AG04450 (cell line): ENCODE measurements at regions of chr4 and their contacts with region 1.

Region 1: DNA sequence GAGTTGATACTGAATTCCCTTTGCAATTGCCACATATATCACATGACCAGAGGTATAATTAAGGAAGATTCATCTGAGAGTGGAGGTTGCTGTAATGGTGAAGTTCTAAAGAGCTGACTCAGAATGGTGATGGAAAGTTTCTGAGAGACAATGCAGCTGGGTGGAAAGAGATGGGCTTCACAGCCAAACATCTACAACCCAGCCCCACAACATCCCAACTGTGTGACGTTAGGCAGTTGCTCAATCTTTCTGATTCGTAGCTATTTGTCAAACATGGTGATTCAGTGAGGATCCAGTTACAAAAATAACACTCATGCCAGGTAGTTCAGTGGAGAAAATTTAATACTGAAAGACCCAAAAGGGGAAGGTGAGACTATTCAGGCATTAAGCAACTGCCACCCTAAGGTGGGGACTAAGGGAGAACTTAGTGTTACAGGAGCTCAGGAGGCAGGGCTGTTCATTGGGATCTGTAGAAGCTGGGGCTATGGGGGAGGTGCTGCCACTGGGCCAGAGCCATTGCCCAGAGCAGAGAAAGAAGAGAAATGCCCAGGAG is 6.9 kb upstream of the AFF1 start:
- DNase-seq: peak; percentile 96
- H3K4me3 ChIP-seq: no peak overlapping the region
- H3K27ac ChIP-seq: peak overlapping the region; percentile 82
- H3K27me3 ChIP-seq: no peaks in the 10 kb centered on the region
- CTCF ChIP-seq: no peak

Region 2: GRCh38 chr4:86778175-86778574 is 149.7 kb before region 1 on chr4:
- CTCF ChIA-PET with region 1: interaction called, 11 read pairs
- POLR2A ChIA-PET with region 1: no interaction called
- DNase-seq: no peak
- H3K4me3 ChIP-seq: no peak overlapping the region
- H3K27ac ChIP-seq: no peak overlapping the region
- H3K27me3 ChIP-seq: no peaks in the 10 kb centered on the region
- CTCF ChIP-seq: no peak

Region 3: GRCh38 chr4:86878640-86879039 is 49.3 kb before region 1 on chr4:
- CTCF ChIA-PET with region 1: no interaction called
- POLR2A ChIA-PET with region 1: no interaction called
- DNase-seq: no peak
- H3K4me3 ChIP-seq: no peak overlapping the region
- H3K27ac ChIP-seq: no peak overlapping the region
- H3K27me3 ChIP-seq: no peaks in the 10 kb centered on the region
- CTCF ChIP-seq: no peak

Region 4: GRCh38 chr4:87006676-87007527 is 79.0 kb after region 1 on chr4:
- CTCF ChIA-PET with region 1: interaction called, 62 read pairs
- POLR2A ChIA-PET with region 1: interaction called, 24 read pairs
- DNase-seq: peak; percentile 87
- H3K4me3 ChIP-seq: peak overlapping the region; percentile 71
- H3K27ac ChIP-seq: peak overlapping the region; percentile 99
- H3K27me3 ChIP-seq: no peaks in the 10 kb centered on the region
- CTCF ChIP-seq: peak; percentile 53

Region 5: GRCh38 chr4:87093443-87094123 is 165.7 kb after region 1 on chr4:
- CTCF ChIA-PET with region 1: interaction called, 77 read pairs
- POLR2A ChIA-PET with region 1: interaction called, 4 read pairs
- DNase-seq: no peak
- H3K4me3 ChIP-seq: no peak overlapping the region
- H3K27ac ChIP-seq: no peak overlapping the region
- H3K27me3 ChIP-seq: no peaks in the 10 kb centered on the region
- CTCF ChIP-seq: peak; percentile 53

Region 6: DNA sequence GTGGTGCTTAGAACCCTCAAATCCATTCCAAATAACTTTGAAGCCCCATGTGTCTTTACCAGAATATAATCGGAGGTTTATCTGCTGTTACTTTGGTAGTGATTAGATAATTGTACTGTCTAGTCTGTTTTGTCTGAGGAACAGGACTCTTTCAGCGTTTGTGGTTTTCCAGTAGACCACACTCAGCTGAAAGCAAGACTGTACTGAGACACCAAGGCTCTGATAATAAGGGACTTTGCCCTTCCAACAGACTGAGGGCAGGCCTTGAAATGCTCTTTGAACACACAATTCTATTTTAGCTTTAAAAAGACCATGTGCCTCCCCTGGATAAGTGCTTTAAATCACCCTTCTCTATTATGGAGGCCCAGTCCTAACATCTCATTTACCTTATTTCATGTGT is 216.4 kb after region 1 on chr4:
- CTCF ChIA-PET with region 1: interaction called, 19 read pairs
- POLR2A ChIA-PET with region 1: no interaction called
- DNase-seq: no peak
- H3K4me3 ChIP-seq: no peak overlapping the region
- H3K27ac ChIP-seq: no peak overlapping the region
- H3K27me3 ChIP-seq: no peaks in the 10 kb centered on the region
- CTCF ChIP-seq: no peak

Region 7: GRCh38 chr4:87235020-87235671 is 307.2 kb after region 1 on chr4:
- CTCF ChIA-PET with region 1: interaction called, 10 read pairs
- POLR2A ChIA-PET with region 1: no interaction called
- DNase-seq: no peak
- H3K4me3 ChIP-seq: peak overlapping the region; percentile 57; the same call in 1 of the 2 replicates
- H3K27ac ChIP-seq: no peak overlapping the region
- H3K27me3 ChIP-seq: no peaks in the 10 kb centered on the region
- CTCF ChIP-seq: no peak